ENCODE measurements at regions of chr17 and their contacts with region 1.

Region 1: DNA sequence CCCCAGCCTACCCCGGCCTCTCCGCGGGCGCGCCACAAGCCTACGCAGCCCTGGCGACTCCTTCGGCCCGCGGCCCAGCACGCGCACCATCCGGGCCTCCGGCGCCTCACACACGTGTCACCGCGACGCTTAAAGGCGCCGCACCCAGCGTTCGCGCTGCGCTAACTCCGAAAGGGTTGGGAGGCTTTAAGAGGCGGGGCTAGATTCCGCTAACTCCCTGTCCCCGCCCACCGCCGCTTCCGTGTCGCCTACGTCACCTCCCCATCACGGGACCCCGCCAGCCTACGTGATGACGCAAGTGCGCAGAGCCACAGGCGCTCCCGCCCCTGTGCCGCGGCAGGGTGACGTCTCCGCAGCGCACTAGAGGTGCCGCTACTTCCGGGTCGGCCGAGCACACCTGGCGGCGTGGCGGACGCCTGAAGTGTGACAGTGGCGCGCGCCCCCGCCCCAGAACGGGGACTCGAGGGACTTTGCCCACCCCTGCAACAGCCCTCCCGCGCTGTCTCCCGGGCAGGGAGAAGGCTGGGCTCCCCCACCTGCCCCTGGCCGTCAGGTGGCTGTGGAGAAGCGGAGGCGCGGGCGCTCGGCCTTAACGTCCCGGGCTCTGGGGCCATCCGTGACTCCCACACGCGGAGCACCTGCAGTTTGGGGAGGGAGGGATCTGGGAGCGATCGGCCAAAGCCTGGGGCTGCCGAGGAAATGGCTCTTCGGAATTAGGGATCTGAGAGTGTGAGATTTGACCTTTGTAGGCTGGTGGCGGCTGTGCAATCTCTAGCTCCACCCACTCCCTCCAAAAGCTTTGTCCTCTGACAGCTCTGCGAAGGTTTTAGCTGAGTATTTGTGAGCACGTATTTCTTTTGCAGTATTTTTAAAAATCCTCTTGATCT is at the start of gene USP36:
- DNase-seq: peak; percentile 100
- ATAC-seq: peak; percentile 89
- H3K4me3 ChIP-seq: peak within 1 kb of the TSS; percentile 82 to 91
- H3K27ac ChIP-seq: peak within 1 kb of the TSS; percentile 88
- H3K4me1 ChIP-seq: peaks cover 20 to 34% of the 10 kb centered on the region in 2 experiments
- H3K27me3 ChIP-seq: no peaks in the 10 kb centered on the region
- CTCF ChIP-seq: 0 out of 6 replicates have a peak, but pooled peaks of 1 of the 3 experiments have one; percentile 12
- POLR2A ChIP-seq: peak; percentile 85
- RAD21 ChIP-seq: no peak
- total RNA-seq, gene USP36: 104 TPM

Region 2: GRCh38 chr17:78241277-78242023 is 599.5 kb before region 1 on chr17:
- CTCF ChIA-PET with region 1: no interaction called
- POLR2A ChIA-PET with region 1: no interaction called
- RAD21 ChIA-PET with region 1: no interaction called
- intact Hi-C with region 1: no loop called
- DNase-seq: peak; percentile 90
- ATAC-seq: peak; percentile 94
- H3K4me3 ChIP-seq: no peak overlapping the region
- H3K27ac ChIP-seq: no peak overlapping the region
- H3K4me1 ChIP-seq: peaks cover 0 to 9% of the 10 kb centered on the region in 2 experiments; a peak in 1 of 4 replicates
- H3K27me3 ChIP-seq: no peaks in the 10 kb centered on the region
- CTCF ChIP-seq: no peak
- POLR2A ChIP-seq: no peak
- RAD21 ChIP-seq: no peak

Region 3: DNA sequence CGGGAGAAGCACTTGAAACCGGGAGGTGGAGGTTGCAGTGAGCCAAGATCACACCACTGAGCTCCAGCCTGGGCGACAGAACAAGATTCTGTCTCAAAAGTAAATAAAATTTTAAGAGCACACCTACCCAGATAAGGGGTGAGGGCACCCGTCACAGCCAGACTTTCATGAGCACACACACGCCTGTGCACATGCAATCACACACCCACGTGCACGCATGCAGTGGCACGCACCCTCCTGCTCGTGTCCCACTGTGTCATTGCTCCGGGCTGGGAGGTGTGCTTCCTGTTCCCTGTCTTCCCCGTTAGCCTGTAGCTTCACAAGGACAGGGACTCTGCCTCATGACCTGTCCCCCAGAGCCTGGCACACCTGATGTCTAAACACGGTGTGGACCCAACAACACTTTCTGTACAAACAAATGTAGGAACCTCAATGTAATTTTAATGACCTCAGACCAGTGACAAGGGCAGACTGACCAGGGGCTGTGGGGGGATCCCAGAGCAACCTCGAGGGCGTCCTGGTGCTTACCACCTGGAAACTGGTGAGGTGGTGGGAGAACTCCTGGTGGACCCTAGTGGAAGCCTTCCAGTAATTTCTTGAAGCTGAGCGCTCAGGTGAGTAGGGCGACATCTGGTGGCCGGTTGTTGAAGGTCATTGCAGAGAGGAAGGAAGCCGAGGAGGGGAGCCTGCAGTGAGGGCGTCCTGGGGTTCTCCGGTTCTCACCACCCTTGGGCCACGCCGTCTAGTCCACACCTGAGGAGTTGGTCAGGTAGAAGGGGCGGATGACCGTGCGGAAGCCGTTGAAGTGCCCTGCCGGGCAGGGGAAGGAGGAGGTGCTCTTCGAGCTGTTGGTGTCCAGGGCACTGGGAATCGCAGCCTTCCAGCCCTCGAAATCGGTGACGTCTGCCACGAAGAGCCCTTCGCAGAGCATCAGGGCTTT is 130.1 kb after region 1 on chr17:
- CTCF ChIA-PET with region 1: interaction called, 6 read pairs
- POLR2A ChIA-PET with region 1: no interaction called
- RAD21 ChIA-PET with region 1: no interaction called
- intact Hi-C with region 1: loop called (anchors 1 kb)
- DNase-seq: peak; percentile 65
- ATAC-seq: peak; percentile 69
- H3K4me3 ChIP-seq: no peak overlapping the region
- H3K27ac ChIP-seq: peak overlapping the region; percentile 13
- H3K4me1 ChIP-seq: peaks cover 8 to 28% of the 10 kb centered on the region in 2 experiments; a peak in 3 of 4 replicates
- H3K27me3 ChIP-seq: no peaks in the 10 kb centered on the region
- CTCF ChIP-seq: peak; percentile 92 to 99 (median 94)
- POLR2A ChIP-seq: no peak
- RAD21 ChIP-seq: peak; percentile 98

Region 4: DNA sequence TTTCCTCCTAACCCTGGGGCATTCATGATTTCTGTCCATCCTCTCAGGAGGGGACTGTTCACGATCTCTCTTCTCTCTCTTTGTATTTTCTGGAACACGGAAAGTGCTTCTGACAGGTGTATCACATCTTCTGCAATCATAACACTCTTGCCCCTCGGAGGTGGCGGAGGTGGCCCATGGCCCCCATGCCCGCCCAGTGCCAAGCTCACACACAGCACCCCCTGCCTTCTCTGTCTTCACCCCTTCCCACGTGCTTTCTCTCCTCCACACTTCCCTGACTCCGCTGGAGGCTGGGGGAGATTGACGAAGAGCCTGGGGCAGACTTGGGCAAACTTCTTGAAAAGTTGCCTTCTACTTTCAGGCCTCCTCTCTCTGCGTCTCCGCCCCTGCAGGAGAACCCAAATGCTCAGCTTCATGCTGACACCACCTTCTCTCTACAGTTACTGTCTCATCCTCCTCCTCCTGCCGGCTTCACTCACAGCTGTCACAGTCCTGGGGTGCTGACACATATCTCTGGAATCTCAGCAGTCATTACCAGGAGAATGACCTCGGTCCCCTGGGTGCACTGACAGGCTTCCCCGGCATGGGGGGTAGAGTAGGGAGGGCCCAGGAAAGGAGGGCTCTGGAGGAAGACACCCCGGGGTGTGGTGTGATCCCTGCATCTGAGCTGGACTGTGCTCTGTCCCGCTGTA is 360.7 kb after region 1 on chr17:
- CTCF ChIA-PET with region 1: no interaction called
- POLR2A ChIA-PET with region 1: no interaction called
- RAD21 ChIA-PET with region 1: no interaction called
- intact Hi-C with region 1: no loop called
- DNase-seq: no peak
- ATAC-seq: peak; percentile 57; the same call in 1 of the 2 replicates
- H3K4me3 ChIP-seq: no peak overlapping the region
- H3K27ac ChIP-seq: no peak overlapping the region
- H3K4me1 ChIP-seq: peaks cover 0 to 7% of the 10 kb centered on the region in 2 experiments; a peak in 1 of 4 replicates
- H3K27me3 ChIP-seq: peaks cover 77% of the 10 kb centered on the region
- CTCF ChIP-seq: no peak
- POLR2A ChIP-seq: no peak
- RAD21 ChIP-seq: no peak